ENCODE measurements at regions of chr18 and their contacts with region 1.

Region 1: DNA sequence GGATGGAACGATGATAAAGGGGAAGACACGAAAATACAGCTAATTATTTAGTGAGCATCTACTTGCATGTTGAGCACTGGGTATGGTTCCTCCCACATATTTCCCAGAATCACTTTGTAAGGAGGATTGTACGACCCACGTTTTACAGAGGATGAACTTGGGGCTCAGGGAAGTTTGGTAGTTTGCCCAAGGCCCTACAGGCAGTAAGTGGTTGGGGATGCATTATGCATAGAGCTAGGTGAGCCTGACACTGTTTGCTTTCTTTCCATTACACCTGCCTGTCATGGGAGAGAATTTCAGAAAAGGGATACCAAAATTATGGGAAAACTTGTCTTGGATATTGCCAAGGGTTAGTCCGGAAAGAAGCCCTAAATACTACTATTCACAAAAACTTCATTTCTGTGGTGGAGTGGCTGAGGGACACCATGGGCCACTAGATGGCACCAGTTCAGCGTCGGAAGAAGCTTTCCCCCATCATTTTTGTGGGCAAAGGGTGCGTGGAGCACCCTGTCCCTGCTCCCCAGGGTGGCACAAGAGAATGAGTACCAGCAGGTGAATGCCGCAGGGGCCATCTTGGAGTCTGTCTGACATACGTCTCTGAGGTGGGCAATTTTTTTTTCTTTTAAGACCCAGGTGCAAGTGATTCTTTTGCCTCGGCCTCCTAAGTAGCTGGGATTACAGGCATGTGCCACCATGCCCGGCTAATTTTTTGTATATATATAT is 23.5 kb upstream of the C18orf32 start:
- DNase-seq: no peak
- H3K4me3 ChIP-seq: no peak overlapping the region
- H3K27ac ChIP-seq: no peak overlapping the region
- H3K4me1 ChIP-seq: no peaks in the 10 kb centered on the region
- H3K27me3 ChIP-seq: peaks cover 0 to 4% of the 10 kb centered on the region in 2 donors
- CTCF ChIP-seq: peak; percentile 61 to 76

Region 2: GRCh38 chr18:49476664-49477411 is 33.7 kb before region 1 on chr18:
- intact Hi-C with region 1: no loop called
- DNase-seq: no peak
- H3K4me3 ChIP-seq: no peak overlapping the region
- H3K27ac ChIP-seq: peak overlapping the region in 1 of 2 donors; percentile 42
- H3K4me1 ChIP-seq: peaks cover 0 to 9% (median 0%) of the 10 kb centered on the region in 4 donors
- H3K27me3 ChIP-seq: no peaks in the 10 kb centered on the region
- CTCF ChIP-seq: no peak

Region 3: GRCh38 chr18:49858309-49859020 is 347.9 kb after region 1 on chr18:
- intact Hi-C with region 1: loop called (anchors 5 kb)
- DNase-seq: no peak
- H3K4me3 ChIP-seq: no peak overlapping the region
- H3K27ac ChIP-seq: no peak overlapping the region
- H3K4me1 ChIP-seq: no peaks in the 10 kb centered on the region
- H3K27me3 ChIP-seq: no peaks in the 10 kb centered on the region
- CTCF ChIP-seq: peak; percentile 67 to 78